A549 (cell line): ENCODE measurements at regions of chr5 and their contacts with region 1.

Region 1: GRCh38 chr5:34915139-34915855 is at the starts of genes BRIX1 and RAD1:
- DNase-seq: peak; percentile 86 to 98
- ATAC-seq: peak; percentile 99 to 100
- H3K4me3 ChIP-seq: peak within 1 kb of the TSS; percentile 96
- H3K27ac ChIP-seq: peak within 1 kb of the TSS; percentile 96 to 98
- H3K4me1 ChIP-seq: peaks cover 38% of the 10 kb centered on the region
- CTCF ChIP-seq: no peak
- EP300 ChIP-seq: no peak
- POLR2A ChIP-seq: peak; percentile 72
- RAD21 ChIP-seq: 0 out of 5 replicates have a peak, but pooled peaks of 1 of the 2 experiments have one; percentile 12
- polyA plus RNA-seq, gene BRIX1: 56.2 and 88.5 TPM in 2 replicates
- polyA plus RNA-seq, gene RAD1: 37.2 and 41.4 TPM in 2 replicates

Region 2: GRCh38 chr5:34474573-34475021 is 440.7 kb before region 1 on chr5:
- CTCF ChIA-PET with region 1: interaction called, 21 read pairs
- POLR2A ChIA-PET with region 1: interaction called, 3 read pairs
- DNase-seq: peak; percentile 57 to 70
- ATAC-seq: peak; percentile 68 to 93; a peak in 5 of 6 replicates
- H3K4me3 ChIP-seq: no peak overlapping the region
- H3K27ac ChIP-seq: no peak overlapping the region
- H3K4me1 ChIP-seq: no peaks in the 10 kb centered on the region
- CTCF ChIP-seq: peak; percentile 92
- EP300 ChIP-seq: no peak
- POLR2A ChIP-seq: no peak
- RAD21 ChIP-seq: peak; percentile 90 to 94

Region 3: GRCh38 chr5:34686762-34687268 is 228.5 kb before region 1 on chr5:
- CTCF ChIA-PET with region 1: no interaction called
- POLR2A ChIA-PET with region 1: interaction called, 11 read pairs
- DNase-seq: peak; percentile 71 to 99
- ATAC-seq: peak; percentile 88 to 95
- H3K4me3 ChIP-seq: peak overlapping the region; percentile 32; the same call in 2 of the 3 replicates
- H3K27ac ChIP-seq: peak overlapping the region; percentile 85 to 93
- H3K4me1 ChIP-seq: peaks cover 91% of the 10 kb centered on the region
- CTCF ChIP-seq: no peak
- EP300 ChIP-seq: peak; percentile 67 to 75; a peak in 2 of 5 replicates
- POLR2A ChIP-seq: no peak
- RAD21 ChIP-seq: peak; percentile 30 to 40; a peak in 4 of 5 replicates

Region 4: DNA sequence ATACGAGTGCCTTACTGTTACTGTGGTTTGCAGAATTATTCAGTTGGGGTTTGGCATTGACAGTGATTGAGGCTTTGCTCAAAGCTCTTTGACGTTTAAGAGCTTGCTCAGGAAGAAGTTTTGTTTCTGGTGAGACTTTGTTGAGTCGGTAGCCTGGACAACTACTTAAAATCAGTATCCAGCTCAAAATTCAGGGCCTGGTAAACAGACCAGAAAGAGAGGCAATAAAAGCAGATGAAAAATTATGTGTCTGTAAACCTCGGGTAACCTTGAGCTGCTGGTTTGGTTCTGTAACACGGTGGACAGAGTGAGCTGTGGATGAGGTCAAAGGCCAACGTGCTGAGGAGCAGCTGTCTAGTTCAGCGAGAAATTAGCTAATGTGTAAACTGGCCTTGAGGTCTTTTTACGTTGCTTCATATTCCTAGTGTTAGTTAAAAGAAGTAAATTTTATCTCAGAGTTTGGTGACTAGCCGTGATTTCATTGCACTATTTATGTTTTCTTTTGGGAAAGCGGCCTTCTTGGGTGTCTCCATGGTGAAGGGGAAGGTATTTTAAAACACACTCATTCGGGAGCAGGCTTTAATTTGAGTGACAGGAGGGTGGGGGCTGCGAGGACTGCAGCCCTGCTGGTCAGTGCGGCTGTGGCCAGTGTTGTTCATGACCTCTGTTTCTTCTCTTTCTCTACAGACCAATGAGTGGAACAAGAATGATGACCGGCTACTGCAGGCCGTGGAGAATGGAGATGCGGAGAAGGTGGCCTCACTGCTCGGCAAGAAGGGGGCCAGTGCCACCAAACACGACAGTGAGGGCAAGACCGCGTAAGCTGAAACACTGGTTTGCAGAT is 158.3 kb before region 1 on chr5:
- CTCF ChIA-PET with region 1: no interaction called
- POLR2A ChIA-PET with region 1: no interaction called
- DNase-seq: no peak
- ATAC-seq: no peak
- H3K4me3 ChIP-seq: no peak overlapping the region
- H3K27ac ChIP-seq: peak overlapping the region in 1 of 2 experiments; percentile 9; a peak in 1 of 6 replicates
- H3K4me1 ChIP-seq: peaks cover 12% of the 10 kb centered on the region
- CTCF ChIP-seq: no peak
- EP300 ChIP-seq: no peak
- POLR2A ChIP-seq: no peak
- RAD21 ChIP-seq: no peak

Region 5: GRCh38 chr5:34929150-34929719 is 13.9 kb after region 1 on chr5 and contains the start of gene DNAJC21:
- CTCF ChIA-PET with region 1: interaction called, 5 read pairs
- POLR2A ChIA-PET with region 1: interaction called, 41 read pairs
- DNase-seq: peak; percentile 87 to 97
- ATAC-seq: peak; percentile 90 to 95
- H3K4me3 ChIP-seq: peak within 1 kb of the TSS; percentile 79
- H3K27ac ChIP-seq: peak within 1 kb of the TSS; percentile 84 to 93
- H3K4me1 ChIP-seq: peaks cover 19% of the 10 kb centered on the region
- CTCF ChIP-seq: no peak
- EP300 ChIP-seq: no peak
- POLR2A ChIP-seq: no peak
- RAD21 ChIP-seq: no peak
- polyA plus RNA-seq, gene DNAJC21: 21.5 and 36.5 TPM in 2 replicates